Activated T-helper 1 cell treated with anti-CD3 and anti-CD28 coated beads, Interleukin-12 subunit alpha, Interleukin-12 subunit beta, Interleukin-2, Interleukin-4 antibody, amounts not matched to agents 30 ng/mL and 10 ng/mL and 1 ng/mL, durations not matched to agents 14 hours and 24 hours and 36 hours (primary cell): ENCODE measurements at regions of chr12 and their contacts with region 1.

Region 1: DNA sequence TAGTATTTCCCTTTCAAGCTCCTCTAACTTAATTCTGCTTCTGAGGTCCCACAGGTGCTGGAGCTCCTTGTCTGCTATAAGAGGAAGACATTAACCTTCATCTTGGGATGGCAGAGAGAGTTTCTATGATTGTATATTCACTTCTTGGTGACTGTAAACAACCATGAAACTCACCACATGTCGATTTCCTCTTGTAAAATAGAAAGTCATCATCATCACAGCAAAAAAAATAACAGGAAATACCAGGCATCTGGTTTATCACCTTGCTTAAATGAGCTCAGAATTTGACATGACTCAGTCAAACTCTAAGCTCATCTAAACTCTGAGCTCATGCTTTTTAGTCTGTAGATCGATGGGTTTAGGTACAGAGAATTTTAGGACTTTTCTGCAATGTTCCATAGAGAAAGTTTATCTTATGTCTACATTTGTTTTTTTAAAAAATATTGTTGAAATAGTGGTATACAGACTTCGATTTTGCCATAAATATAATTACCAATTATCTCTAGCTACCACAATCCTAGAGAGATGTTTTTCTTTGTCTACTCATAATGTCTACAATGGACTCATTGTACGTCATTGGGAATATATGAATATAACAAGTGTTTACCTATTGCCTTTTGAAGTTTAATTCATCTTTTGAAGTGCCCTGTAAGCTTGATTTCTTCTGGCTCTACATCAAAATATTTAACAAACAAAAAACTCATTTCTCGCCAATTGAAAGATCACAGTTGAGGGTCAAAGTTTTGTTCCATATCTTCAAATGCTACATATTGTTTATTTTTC is 58.4 kb downstream of the IGF1 start:
- DNase-seq: no peak
- H3K4me3 Mint-ChIP-seq: no peak overlapping the region
- H3K27ac Mint-ChIP-seq: peak overlapping the region; percentile 78
- H3K4me1 Mint-ChIP-seq: peaks cover 15% of the 10 kb centered on the region
- H3K27me3 Mint-ChIP-seq: peaks cover 6% of the 10 kb centered on the region

Region 2: DNA sequence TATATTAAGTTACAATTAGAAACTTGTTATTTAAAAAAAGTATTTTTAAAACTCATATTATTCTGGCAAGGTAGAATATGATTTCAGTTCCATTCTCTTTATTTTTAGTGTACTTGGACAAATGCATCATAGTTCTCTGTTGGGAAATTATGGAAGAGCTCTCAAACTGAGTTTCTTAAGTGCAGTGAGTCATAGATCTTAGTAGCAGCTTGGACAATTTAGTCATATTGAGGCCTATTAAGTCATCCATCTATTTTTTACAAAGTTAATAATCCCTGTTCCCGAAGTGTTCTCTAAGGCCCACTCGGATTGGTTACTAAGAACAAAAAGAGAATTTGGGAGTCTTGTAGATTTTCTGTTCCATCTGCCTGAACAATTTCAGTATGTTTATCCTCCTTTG is 1513.5 kb before region 1 on chr12:
- intact Hi-C with region 1: no loop called
- DNase-seq: no peak
- H3K4me3 Mint-ChIP-seq: no peak overlapping the region
- H3K27ac Mint-ChIP-seq: no peak overlapping the region
- H3K4me1 Mint-ChIP-seq: no peaks in the 10 kb centered on the region
- H3K27me3 Mint-ChIP-seq: no peaks in the 10 kb centered on the region

Region 3: DNA sequence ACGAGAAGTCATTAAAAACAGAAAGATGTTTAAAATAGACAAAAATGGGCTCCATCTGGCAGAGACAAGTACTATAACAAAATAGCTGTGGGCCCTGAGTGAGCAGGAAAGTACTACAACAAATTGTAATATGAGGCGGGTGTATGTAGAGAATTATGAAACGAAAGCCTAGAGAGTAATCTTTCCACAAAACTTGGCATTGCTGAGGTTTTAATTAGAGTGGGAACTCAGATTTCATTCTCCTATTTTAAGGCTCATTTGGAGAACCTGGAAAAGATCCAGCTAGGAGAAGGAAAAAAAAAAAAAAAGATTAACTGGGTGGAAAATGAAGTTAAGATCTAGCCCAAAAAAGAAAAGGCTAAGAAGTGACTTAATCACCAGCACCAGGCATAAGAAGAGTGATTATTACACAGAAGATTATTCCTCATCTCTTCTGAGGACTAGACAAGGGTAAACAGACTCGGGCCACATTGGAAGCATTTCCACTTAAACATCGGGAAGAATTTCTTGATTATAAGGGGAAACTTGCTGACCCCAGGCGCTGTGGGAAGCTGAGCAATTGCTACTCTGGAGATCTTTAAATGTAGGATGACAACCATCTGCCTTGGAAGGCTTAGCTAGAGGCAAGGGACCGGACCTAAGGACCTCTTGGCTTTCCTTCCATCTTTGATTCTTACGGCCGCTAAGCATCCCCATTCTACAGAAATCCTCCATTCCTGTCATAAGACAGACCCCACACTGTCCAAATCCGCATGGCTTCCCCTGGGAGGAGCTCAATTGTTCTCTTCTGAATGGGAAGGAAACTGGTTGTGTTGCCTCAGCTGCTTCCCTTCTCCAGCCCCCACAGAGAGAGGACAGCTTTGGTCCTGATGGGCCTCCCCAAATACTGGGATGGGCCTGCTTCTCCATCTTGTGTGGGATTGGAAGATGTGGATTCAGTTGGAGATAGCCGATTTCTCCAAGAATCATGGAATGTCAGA is 17.7 kb after region 1 on chr12:
- intact Hi-C with region 1: loop called (anchors 2 kb)
- DNase-seq: no peak
- H3K4me3 Mint-ChIP-seq: no peak overlapping the region
- H3K27ac Mint-ChIP-seq: no peak overlapping the region
- H3K4me1 Mint-ChIP-seq: peaks cover 4% of the 10 kb centered on the region
- H3K27me3 Mint-ChIP-seq: no peaks in the 10 kb centered on the region

Region 4: DNA sequence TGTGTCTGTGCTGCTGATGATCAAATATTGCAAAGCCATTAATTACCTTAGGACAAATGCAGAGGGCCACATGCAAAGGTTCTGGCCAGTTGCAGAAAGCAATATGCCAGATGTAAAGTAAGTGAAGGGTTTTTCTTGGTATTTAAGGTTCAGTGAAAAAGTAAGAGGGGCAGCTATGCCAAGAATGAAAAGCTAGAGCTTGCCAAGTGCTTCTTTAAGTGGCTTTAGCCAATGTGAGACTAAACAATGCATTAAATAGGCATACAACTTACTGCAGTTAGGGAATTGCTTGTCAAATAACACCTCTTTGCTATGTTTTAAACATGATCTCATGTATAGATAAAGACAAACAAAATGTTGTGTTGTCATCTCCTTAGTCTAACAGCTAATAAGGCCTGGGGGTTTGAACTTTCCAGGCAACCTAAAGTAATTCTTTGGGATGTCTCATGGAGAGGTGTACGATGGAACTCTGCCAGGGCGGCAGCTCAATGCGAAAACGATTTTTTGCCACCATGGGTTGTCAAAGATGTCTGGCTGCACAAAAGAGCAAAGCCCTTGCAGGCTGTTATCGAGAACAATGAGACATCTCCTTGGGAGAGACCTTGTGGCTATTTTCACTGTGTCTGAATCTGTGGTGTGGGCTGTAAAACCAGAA is 46.4 kb after region 1 on chr12:
- intact Hi-C with region 1: no loop called
- DNase-seq: no peak
- H3K4me3 Mint-ChIP-seq: no peak overlapping the region
- H3K27ac Mint-ChIP-seq: no peak overlapping the region
- H3K4me1 Mint-ChIP-seq: peaks cover 2% of the 10 kb centered on the region
- H3K27me3 Mint-ChIP-seq: peaks cover 6% of the 10 kb centered on the region

Region 5: GRCh38 chr12:102479099-102479887 is 57.3 kb after region 1 on chr12:
- intact Hi-C with region 1: loop called (anchors 1 kb)
- DNase-seq: no peak
- H3K4me3 Mint-ChIP-seq: no peak overlapping the region
- H3K27ac Mint-ChIP-seq: no peak overlapping the region
- H3K4me1 Mint-ChIP-seq: peaks cover 47% of the 10 kb centered on the region
- H3K27me3 Mint-ChIP-seq: no peaks in the 10 kb centered on the region